Activated naive CD4-positive, alpha-beta T cell treated with anti-CD3 and anti-CD28 coated beads, Interleukin-2, amount 10 ng/mL, durations not matched to agents 7 days and 5 days (primary cell): ENCODE measurements at regions of chr2 and their contacts with region 1.

Region 1: GRCh38 chr2:151051574-151052220 is 210.0 kb downstream of the RBM43 start:
- DNase-seq: peak; percentile 44
- H3K4me3 Mint-ChIP-seq: no peak overlapping the region
- H3K27ac Mint-ChIP-seq: no peak overlapping the region
- H3K4me1 Mint-ChIP-seq: no peaks in the 10 kb centered on the region
- H3K27me3 Mint-ChIP-seq: no peaks in the 10 kb centered on the region

Region 2: GRCh38 chr2:149597668-149598326 is 1453.9 kb before region 1 on chr2:
- CTCF ChIA-PET with region 1: interaction called, 12 read pairs
- DNase-seq: peak; percentile 56
- H3K4me3 Mint-ChIP-seq: no peak overlapping the region
- H3K27ac Mint-ChIP-seq: peak overlapping the region; percentile 69
- H3K4me1 Mint-ChIP-seq: peaks cover 25% of the 10 kb centered on the region
- H3K27me3 Mint-ChIP-seq: peaks cover 19% of the 10 kb centered on the region